Panc1 (cell line): ENCODE measurements at regions of chr12 and their contacts with region 1.

Region 1: DNA sequence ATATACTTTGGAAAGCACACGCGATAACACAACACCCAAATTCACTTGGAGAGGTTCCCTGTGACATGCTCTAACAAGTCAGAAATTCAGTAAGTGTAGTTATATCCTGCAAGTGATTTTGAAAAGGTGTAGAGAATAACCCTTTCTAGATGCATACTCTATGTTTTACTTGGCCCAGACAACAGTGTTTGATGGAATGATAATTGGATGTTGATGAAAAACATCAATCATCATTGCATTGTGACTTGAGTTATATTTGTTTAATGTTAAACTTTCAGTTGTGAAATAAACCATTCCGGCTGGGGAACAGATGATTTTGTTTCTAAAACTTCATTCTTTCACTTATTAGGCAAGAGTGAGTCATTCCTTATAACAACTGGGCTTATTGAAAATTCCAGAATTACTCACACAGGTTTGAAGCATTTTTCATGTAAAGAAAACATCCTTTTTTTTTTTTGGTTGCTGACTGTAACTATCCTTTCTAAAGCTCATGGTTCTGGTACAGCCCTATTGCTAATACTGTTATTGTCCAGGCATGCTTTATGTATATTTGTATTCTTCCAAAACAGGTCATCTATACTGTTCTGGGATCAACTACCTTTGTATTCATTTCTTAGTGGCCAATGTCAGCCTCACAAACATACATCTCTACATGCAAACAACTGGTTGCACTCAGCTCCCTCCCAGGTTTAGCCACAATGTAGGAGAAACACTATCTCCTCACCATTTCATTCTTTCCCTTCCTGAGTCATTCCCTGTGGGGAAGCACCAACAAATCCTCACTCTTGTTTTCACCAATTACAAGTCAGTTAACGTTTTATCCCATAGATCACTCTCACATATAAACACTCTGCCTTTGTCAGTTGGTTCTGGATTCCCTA is 121.2 kb upstream of the LRIG3 start:
- DNase-seq: peak; percentile 25
- ATAC-seq: peak; percentile 53; the same call in 1 of the 2 replicates
- H3K4me3 ChIP-seq: no peak overlapping the region
- H3K27ac ChIP-seq: no peak overlapping the region
- H3K4me1 ChIP-seq: no peaks in the 10 kb centered on the region
- H3K27me3 ChIP-seq: no peaks in the 10 kb centered on the region
- CTCF ChIP-seq: no peak

Region 2: DNA sequence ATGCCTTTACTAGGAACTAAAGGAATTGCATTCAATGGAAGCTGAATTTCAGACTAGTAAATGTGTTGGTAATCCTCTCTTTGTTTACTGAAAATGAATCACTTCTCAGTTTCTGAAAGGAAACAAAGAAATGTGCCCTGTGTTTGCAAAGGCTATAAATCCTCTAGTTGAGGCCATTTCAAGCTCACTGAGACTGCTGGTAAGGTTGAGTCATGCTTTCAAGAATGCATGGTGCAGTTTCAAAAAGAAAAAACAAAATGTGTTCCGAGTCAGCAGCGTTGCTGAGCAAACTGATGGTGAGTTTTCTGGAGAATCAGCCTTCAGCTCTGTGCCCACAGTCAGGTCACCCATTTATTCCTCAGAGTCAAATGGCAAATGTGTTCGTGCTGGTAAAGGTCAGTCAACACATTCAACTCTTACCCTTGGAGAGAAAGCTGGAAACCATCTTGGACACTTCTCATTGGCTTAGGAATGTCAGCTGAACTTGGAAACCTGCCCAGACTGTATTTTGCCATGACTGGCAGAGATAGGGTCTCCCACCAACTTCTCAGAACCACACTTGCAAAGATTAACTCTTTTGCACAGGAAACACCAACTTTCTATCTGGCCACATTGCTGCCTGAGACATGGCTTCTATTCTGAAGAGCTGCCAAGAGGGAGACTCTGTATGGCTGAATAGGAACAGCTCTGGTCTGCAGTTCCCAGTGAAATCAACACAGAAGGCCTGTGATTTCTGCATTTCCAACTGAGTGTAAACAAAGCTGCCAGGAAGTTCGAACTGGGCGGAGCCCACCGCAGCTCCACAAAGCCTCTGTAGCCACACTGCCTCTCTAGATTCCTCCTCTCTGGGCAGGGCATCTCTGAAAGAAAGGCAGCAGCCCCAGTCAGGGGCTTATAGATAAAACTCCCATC is 615.7 kb before region 1 on chr12:
- CTCF ChIA-PET with region 1: no interaction called
- POLR2A ChIA-PET with region 1: interaction called, 11 read pairs
- in situ Hi-C with region 1: no loop called
- intact Hi-C with region 1: no loop called
- DNase-seq: peak; percentile 84
- ATAC-seq: peak; percentile 94
- H3K4me3 ChIP-seq: peak overlapping the region in 1 of 2 experiments; percentile 15; a peak in 2 of 4 replicates
- H3K27ac ChIP-seq: peak overlapping the region; percentile 87
- H3K4me1 ChIP-seq: peaks cover 19% of the 10 kb centered on the region
- H3K27me3 ChIP-seq: no peaks in the 10 kb centered on the region
- CTCF ChIP-seq: no peak

Region 3: GRCh38 chr12:58701536-58701935 is 339.9 kb before region 1 on chr12:
- CTCF ChIA-PET with region 1: no interaction called
- POLR2A ChIA-PET with region 1: no interaction called
- in situ Hi-C with region 1: no loop called
- intact Hi-C with region 1: no loop called
- DNase-seq: no peak
- ATAC-seq: no peak
- H3K4me3 ChIP-seq: no peak overlapping the region
- H3K27ac ChIP-seq: no peak overlapping the region
- H3K4me1 ChIP-seq: no peaks in the 10 kb centered on the region
- H3K27me3 ChIP-seq: no peaks in the 10 kb centered on the region
- CTCF ChIP-seq: no peak

Region 4: DNA sequence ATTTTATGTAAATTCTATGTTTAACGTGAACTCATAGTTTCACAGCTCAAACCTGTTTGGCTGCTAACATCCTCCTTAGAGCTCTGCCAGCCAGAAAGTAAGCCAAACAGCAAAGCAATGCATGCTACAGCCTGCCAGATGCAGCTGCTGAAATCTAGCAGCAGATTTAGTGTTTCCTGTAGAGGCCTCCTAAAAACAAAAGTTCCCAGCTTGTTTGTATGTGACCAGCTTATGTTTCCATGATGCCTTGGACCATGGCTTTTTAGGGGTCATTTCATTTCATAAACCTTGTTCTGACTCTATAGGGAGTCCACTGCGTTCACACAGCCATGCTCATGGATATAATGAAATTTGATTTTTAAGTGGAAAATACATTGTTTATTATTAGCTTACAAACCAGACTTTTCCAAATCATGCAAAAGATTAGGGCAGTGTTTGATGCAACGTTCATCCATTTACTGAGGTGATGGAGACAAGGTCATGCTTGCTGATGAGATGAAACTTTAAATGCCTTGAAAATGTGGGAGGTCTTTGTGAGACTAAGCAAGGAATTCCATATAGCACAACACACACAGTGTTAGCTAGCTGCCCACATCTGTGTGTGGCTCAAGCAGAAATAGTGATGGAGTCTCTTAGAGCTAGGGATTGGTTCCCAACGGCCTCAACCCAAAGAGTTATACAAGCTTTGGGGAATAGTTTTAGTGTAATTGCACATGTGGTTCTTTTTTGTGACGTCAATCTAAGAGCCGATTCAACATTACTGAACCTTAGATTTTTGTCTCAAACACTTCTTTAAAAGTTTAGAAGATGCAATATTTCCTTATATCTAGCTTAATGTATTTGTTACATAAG is 36.3 kb after region 1 on chr12:
- CTCF ChIA-PET with region 1: no interaction called
- POLR2A ChIA-PET with region 1: no interaction called
- in situ Hi-C with region 1: no loop called
- intact Hi-C with region 1: no loop called
- DNase-seq: no peak
- ATAC-seq: no peak
- H3K4me3 ChIP-seq: no peak overlapping the region
- H3K27ac ChIP-seq: no peak overlapping the region
- H3K4me1 ChIP-seq: no peaks in the 10 kb centered on the region
- H3K27me3 ChIP-seq: no peaks in the 10 kb centered on the region; the same call in 1 of the 2 replicates
- CTCF ChIP-seq: no peak